ENCODE measurements at regions of chr3 and their contacts with region 1.

Region 1: DNA sequence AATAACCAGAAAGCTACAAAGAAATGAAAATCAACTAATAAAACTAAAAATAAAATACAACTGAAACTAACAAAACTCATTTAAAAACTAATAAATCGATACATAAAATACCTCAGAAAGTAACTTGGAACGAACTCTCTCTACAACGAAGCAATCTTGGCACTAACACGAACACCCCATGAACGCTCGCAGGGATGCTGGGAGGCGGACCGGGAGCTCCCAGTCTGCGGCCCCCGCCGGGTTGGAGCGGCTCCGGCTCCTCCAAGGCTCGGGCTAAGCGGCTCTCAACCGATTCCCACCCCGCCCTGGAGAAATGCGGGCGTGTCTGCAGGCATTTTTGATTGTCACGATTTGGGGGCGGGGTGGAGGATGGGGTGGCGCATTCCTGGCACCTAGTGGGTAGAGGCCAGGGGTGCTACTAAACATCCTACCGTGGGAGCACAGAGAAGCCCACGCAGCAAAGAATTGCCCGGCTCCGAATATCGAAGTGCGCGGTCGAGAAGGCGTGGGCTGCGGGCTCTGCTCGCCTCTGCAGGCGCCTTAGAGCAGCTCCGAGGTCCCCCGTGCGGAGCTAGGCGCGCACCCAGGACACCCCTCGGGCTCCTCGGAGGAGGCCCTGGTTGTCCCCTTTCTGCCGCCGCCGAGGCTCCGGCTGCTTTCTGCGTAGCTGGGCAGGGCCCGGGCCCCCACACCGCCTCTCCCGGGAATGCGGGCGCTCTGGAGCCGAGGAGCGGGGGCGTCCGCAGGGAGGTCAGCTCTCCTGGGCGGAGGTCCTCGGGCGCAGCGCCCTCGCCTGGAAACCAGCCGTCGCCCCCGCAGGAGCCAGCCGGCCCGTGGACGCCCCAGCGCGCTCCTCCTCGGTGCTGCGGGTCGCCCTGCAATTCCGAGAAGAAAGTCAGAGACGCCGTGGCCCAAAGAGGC is 16.4 kb upstream of the LAMP3 start:
- DNase-seq: peak; percentile 77
- H3K4me3 Mint-ChIP-seq: peak overlapping the region; percentile 74
- H3K27ac Mint-ChIP-seq: no peak overlapping the region
- H3K4me1 Mint-ChIP-seq: peaks cover 3% of the 10 kb centered on the region
- H3K27me3 Mint-ChIP-seq: peaks cover 22% of the 10 kb centered on the region

Region 2: DNA sequence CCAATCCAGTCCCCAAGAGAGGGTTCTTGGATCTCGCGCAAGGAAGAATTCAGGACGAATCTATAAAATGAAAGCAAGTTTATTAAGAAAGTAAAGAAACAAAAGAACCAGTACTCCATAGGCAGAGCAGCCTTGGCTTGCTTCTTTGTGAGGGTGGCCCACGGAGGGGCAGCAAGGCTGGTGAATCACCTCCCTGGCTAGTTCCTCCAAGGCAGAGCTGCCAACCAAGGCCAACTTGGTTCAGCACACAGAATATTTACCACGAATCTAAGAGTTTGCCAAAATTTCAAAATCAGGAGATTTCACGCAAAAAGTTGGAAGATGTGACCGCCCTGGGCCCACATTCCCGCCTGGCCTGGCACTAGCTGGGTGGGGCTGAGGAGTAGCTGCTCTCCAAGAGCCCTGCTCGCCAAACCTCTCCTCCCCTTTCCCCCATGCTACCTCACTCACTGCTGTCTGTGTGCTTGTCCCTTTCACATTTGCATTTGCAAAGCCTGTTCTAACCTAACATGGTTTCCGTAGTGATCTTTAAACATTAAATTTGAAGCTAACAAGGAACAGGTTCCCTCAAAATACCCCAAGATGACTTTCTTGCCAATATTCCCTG is 172.4 kb before region 1 on chr3:
- CTCF ChIA-PET with region 1: no interaction called
- POLR2A ChIA-PET with region 1: no interaction called
- intact Hi-C with region 1: no loop called
- DNase-seq: no peak
- H3K4me3 Mint-ChIP-seq: no peak overlapping the region
- H3K27ac Mint-ChIP-seq: no peak overlapping the region
- H3K4me1 Mint-ChIP-seq: no peaks in the 10 kb centered on the region
- H3K27me3 Mint-ChIP-seq: no peaks in the 10 kb centered on the region

Region 3: DNA sequence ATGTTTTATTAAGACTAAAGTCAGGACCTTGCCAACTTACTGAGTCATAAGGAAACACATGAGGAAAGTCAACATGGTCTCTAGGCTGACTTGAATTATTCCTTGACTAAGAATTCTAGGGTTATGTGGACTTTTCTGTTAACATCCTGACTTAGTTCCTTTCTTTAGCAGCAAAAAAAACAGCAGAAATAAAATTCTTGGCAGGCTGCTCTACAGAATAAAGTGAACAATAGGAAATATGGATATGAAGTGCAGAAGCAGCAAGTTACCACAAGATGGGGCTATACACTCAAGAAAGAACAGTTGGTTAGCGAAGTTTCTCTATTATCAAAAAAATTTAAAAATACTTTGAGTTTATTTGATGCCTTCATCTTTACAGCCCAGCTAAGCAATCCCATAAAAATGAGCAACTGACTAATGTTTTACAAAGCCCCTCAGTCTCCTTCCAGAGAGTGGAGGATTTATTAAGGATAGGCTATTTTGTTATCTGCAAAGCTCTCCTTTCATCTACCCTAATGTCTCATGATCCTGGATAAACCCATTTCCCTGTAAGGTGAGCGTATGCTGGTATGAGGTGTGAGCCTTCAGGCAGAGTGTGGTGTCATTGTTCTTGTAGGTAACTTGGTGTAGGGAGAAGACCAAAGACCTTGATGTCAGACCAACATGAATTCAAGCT is 56.5 kb before region 1 on chr3:
- CTCF ChIA-PET with region 1: interaction called, 53 read pairs
- POLR2A ChIA-PET with region 1: interaction called, 3 read pairs
- intact Hi-C with region 1: loop called (anchors 1 kb)
- DNase-seq: no peak
- H3K4me3 Mint-ChIP-seq: no peak overlapping the region
- H3K27ac Mint-ChIP-seq: no peak overlapping the region
- H3K4me1 Mint-ChIP-seq: peaks cover 6% of the 10 kb centered on the region
- H3K27me3 Mint-ChIP-seq: peaks cover 3% of the 10 kb centered on the region

Region 4: GRCh38 chr3:183158551-183159006 is 20.3 kb before region 1 on chr3:
- CTCF ChIA-PET with region 1: no interaction called
- POLR2A ChIA-PET with region 1: no interaction called
- intact Hi-C with region 1: loop called (anchors 2 kb)
- DNase-seq: peak; percentile 67
- H3K4me3 Mint-ChIP-seq: no peak overlapping the region
- H3K27ac Mint-ChIP-seq: peak overlapping the region; percentile 26
- H3K4me1 Mint-ChIP-seq: peaks cover 27% of the 10 kb centered on the region
- H3K27me3 Mint-ChIP-seq: peaks cover 3% of the 10 kb centered on the region

Region 5: DNA sequence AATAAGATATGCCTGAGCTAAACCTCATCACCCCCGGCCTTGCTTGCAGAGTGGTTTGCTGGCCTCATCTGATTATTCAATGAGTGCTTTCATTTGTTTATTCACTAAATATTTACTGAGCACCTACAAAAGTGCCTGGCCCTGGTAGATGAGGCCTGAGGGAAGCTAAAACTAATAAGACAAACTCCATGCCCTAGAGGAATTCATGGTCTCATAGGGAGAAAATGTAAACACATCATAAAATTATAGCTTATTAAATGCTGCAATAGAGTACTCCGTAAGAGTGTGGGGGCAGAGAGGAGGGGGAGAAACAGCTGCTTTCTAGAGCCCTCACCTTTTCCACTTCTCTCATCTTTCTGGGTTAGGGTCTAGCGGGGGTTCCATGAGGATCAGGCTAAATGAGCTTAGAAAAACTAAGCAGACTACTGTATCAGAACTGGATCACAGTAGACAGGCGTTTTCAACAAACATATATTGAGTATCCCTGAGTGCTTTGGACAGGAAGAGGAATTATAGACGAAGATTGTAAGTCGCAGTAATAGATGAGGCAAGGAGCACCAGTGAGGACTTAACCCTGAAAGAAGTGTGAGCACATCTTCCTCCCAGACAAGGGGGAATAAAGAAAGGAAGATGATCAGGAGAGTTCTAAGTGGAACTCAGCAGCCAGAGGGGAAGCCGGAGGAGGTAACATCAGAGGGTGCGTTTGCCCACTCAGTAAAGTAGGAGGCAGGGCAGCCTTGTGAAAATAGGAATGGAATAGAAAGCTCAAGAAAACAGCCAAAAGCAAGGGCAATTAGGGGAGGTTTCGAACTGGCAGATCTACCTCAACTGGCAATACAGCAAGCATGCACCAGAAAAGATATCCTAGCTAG is 15.2 kb after region 1 on chr3:
- CTCF ChIA-PET with region 1: interaction called, 11 read pairs
- POLR2A ChIA-PET with region 1: no interaction called
- intact Hi-C with region 1: no loop called
- DNase-seq: no peak
- H3K4me3 Mint-ChIP-seq: no peak overlapping the region
- H3K27ac Mint-ChIP-seq: no peak overlapping the region
- H3K4me1 Mint-ChIP-seq: no peaks in the 10 kb centered on the region
- H3K27me3 Mint-ChIP-seq: no peaks in the 10 kb centered on the region

Region 6: GRCh38 chr3:183210839-183211341 is 32.0 kb after region 1 on chr3:
- CTCF ChIA-PET with region 1: interaction called, 11 read pairs
- POLR2A ChIA-PET with region 1: no interaction called
- intact Hi-C with region 1: no loop called
- DNase-seq: peak; percentile 56
- H3K4me3 Mint-ChIP-seq: no peak overlapping the region
- H3K27ac Mint-ChIP-seq: peak overlapping the region; percentile 67
- H3K4me1 Mint-ChIP-seq: peaks cover 46% of the 10 kb centered on the region
- H3K27me3 Mint-ChIP-seq: no peaks in the 10 kb centered on the region

Region 7: DNA sequence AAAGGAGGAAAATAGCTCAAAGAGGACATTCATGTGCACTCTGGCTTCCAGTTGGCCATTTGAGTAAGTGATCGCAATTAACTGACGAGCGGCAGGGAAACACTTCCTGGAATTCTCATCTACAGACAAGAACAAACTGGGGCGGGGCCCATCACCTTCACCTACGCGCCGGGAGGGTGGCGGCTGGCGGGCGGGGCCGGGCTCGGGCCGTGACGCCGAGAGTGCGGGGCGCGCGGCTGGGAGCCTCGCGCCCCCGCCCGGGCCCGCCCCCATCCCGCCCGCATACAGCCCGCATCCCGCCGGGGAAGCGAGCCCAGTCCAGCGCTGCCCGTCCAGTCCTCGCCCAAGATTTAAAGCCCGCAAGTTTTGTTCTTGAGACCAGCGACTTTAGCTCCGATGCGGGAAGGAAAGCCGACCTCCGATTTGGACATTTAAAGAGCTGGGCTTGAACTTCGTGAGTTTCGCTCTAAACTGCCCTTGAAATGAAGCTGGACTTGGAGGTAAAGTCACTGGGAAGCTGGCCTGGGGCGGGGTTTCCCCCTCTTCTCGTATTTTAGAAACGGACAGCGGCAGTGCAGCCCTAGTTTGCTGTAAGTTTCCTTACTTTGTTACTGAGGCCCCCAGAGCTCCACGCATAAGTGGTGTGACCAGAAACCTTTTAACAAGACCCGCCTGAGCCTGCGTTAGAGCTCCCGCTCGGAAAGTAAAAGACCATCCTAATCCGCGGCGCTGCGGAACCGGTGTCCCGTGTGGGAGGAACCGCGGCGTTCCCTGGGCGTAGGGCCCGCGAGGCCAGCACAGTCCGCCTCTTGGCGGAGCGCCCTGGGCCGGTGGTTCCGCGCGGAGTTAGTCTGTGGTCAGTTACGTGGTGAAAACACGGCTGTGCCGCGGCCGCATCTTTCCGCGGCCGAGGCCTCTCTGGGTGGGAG is 74.3 kb after region 1 on chr3 and contains the start of gene B3GNT5:
- CTCF ChIA-PET with region 1: no interaction called
- POLR2A ChIA-PET with region 1: no interaction called
- intact Hi-C with region 1: loop called (anchors 5 kb)
- DNase-seq: peak; percentile 60
- H3K4me3 Mint-ChIP-seq: peak within 1 kb of the TSS; percentile 76
- H3K27ac Mint-ChIP-seq: peak within 1 kb of the TSS; percentile 34
- H3K4me1 Mint-ChIP-seq: peaks cover 12% of the 10 kb centered on the region
- H3K27me3 Mint-ChIP-seq: peaks cover 18% of the 10 kb centered on the region
- total RNA-seq, gene B3GNT5: 12.7 to 12.9 TPM